ENCODE measurements at regions of chr11 and their contacts with region 1.

Region 1: GRCh38 chr11:10623797-10624761 is 55.6 kb upstream of the LYVE1 start:
- DNase-seq: peak; percentile 41 to 84
- H3K4me3 ChIP-seq: no peak overlapping the region
- H3K27ac ChIP-seq: no peak overlapping the region
- H3K4me1 ChIP-seq: no peaks in the 10 kb centered on the region; a peak in 1 of 7 replicates
- H3K27me3 ChIP-seq: no peaks in the 10 kb centered on the region
- CTCF ChIP-seq: peak; percentile 74 to 84 (median 82)
- EP300 ChIP-seq: no peak
- POLR2A ChIP-seq: no peak
- RAD21 ChIP-seq: peak; percentile 89 to 92

Region 2: GRCh38 chr11:10375280-10375971 is 248.7 kb before region 1 on chr11:
- CTCF ChIA-PET with region 1: no interaction called
- POLR2A ChIA-PET with region 1: no interaction called
- DNase-seq: peak in 1 of 2 experiments; percentile 22
- H3K4me3 ChIP-seq: no peak overlapping the region
- H3K27ac ChIP-seq: no peak overlapping the region
- H3K4me1 ChIP-seq: no peaks in the 10 kb centered on the region
- H3K27me3 ChIP-seq: no peaks in the 10 kb centered on the region
- CTCF ChIP-seq: no peak
- EP300 ChIP-seq: no peak
- POLR2A ChIP-seq: no peak
- RAD21 ChIP-seq: no peak

Region 3: GRCh38 chr11:10400856-10401255 is 223.2 kb before region 1 on chr11:
- CTCF ChIA-PET with region 1: interaction called, 17 read pairs
- POLR2A ChIA-PET with region 1: no interaction called
- DNase-seq: no peak
- H3K4me3 ChIP-seq: no peak overlapping the region
- H3K27ac ChIP-seq: no peak overlapping the region
- H3K4me1 ChIP-seq: no peaks in the 10 kb centered on the region
- H3K27me3 ChIP-seq: no peaks in the 10 kb centered on the region; a peak in 1 of 7 replicates
- CTCF ChIP-seq: no peak
- EP300 ChIP-seq: no peak
- POLR2A ChIP-seq: no peak
- RAD21 ChIP-seq: no peak

Region 4: DNA sequence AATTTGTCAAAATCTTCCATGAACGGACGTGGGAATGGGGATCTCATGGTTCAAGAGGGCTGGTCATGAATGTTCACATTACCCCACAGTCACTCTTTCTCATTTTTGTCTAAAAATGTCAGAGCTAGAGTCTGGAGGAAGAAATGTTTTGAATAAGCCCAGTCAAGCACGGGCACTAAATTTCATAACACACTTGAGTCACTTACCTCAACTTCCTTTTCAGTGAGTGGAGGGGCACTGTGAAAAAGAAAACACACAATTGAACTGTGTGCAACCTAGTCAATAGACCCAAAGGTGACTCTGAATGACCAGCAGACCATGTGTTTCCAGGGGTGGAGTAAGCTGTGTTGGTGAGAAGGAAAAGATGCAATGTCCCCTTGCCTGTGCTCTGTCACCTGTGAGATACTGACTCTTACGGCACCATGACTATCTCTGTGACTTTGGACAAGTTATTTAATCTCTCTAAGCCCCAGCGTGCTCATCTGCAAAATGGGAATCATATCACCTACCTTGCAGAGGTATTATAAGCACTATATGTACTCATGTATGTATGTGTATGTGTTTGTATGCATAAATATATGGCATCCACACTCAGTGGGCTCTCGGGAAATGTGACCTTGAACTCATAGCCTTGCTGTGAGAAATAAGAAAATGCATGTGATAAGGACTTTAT is 17.4 kb before region 1 on chr11:
- CTCF ChIA-PET with region 1: interaction called, 29 read pairs
- POLR2A ChIA-PET with region 1: no interaction called
- DNase-seq: no peak
- H3K4me3 ChIP-seq: no peak overlapping the region
- H3K27ac ChIP-seq: no peak overlapping the region
- H3K4me1 ChIP-seq: peaks cover 0 to 12% (median 6%) of the 10 kb centered on the region in 4 experiments; a peak in 5 of 7 replicates
- H3K27me3 ChIP-seq: no peaks in the 10 kb centered on the region
- CTCF ChIP-seq: no peak
- EP300 ChIP-seq: no peak
- POLR2A ChIP-seq: no peak
- RAD21 ChIP-seq: no peak

Region 5: DNA sequence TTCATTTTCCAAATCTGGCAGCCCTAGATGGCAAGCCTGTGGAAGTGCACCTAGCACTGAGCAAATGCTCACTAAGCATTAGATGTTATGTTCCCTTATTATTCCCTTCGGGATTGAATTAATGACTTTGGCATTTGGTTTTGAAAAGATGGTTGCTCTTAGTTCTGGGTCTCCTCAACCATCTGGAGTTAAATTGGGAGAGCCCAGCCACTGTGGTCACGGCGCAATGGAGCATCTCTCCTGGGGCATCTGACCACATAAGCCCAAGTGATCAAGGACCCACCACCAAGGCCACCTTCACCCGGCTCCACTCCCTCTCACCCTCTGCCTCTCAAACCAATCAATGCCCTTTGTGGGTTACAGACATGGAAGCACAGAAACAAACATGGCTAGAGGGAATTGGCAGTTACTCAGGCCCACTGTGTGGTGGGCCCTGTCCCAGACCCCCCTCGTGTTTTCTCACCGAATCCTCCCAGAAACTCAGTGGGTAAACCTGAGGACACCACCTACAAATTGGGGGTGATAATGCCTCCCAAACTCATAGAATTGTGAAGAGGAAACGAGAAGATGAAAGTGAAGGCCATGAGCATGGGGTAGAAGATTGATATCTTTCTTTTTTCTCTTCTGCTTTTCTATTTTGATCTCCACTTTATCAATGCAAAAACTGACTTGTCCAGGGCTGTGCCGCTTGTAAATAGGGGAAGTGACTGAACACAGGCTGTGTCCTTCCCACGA is 17.3 kb after region 1 on chr11:
- CTCF ChIA-PET with region 1: interaction called, 43 read pairs
- POLR2A ChIA-PET with region 1: interaction called, 6 read pairs
- DNase-seq: no peak
- H3K4me3 ChIP-seq: no peak overlapping the region
- H3K27ac ChIP-seq: no peak overlapping the region
- H3K4me1 ChIP-seq: no peaks in the 10 kb centered on the region
- H3K27me3 ChIP-seq: no peaks in the 10 kb centered on the region
- CTCF ChIP-seq: no peak
- EP300 ChIP-seq: no peak
- POLR2A ChIP-seq: no peak
- RAD21 ChIP-seq: no peak

Region 6: DNA sequence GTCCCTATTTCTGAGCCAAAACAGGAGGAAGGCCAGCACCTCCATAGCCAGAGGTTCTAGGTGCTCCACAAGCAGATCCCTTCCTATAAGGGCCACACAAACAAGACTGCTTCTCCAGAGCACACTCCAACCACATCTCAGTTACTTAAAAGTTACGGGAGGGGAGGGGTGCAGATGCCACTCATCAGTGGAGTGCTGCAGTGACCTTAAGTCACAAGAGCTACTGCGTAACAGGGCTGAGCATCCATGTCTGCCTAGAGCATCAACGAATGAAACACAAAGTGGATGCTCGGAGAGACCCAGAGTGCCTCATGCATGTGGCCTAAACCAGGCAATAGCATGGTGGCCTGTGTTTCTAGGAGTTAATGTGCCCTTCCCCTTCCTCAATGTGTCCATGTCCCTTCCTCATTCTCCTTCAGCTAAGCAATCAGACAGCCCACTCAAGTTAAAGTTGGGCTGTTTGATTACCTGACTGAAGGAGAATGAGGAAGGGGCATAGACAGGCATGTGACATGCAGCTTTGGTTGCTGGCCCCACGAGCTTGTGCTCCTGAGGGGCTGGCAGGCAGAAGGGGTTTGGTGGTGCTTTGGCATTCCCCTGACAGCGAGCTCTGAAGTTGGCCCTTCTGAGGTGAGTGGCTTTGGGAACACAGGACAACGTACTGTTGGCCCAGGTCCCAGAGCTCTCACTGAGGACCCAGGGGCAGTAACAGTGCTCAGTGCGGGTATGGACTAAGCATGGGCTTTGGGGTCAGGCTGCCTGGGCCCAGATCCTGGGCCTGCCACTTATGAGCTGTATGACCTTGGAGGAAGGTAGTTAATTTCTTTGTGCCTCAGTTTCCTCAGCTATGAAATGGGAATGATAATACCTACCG is 22.6 kb after region 1 on chr11:
- CTCF ChIA-PET with region 1: interaction called, 36 read pairs
- POLR2A ChIA-PET with region 1: no interaction called
- DNase-seq: no peak
- H3K4me3 ChIP-seq: no peak overlapping the region
- H3K27ac ChIP-seq: no peak overlapping the region
- H3K4me1 ChIP-seq: peaks cover 0 to under 1% (median 0%) of the 10 kb centered on the region in 4 experiments; a peak in 1 of 7 replicates
- H3K27me3 ChIP-seq: no peaks in the 10 kb centered on the region
- CTCF ChIP-seq: no peak
- EP300 ChIP-seq: no peak
- POLR2A ChIP-seq: no peak
- RAD21 ChIP-seq: no peak

Region 7: DNA sequence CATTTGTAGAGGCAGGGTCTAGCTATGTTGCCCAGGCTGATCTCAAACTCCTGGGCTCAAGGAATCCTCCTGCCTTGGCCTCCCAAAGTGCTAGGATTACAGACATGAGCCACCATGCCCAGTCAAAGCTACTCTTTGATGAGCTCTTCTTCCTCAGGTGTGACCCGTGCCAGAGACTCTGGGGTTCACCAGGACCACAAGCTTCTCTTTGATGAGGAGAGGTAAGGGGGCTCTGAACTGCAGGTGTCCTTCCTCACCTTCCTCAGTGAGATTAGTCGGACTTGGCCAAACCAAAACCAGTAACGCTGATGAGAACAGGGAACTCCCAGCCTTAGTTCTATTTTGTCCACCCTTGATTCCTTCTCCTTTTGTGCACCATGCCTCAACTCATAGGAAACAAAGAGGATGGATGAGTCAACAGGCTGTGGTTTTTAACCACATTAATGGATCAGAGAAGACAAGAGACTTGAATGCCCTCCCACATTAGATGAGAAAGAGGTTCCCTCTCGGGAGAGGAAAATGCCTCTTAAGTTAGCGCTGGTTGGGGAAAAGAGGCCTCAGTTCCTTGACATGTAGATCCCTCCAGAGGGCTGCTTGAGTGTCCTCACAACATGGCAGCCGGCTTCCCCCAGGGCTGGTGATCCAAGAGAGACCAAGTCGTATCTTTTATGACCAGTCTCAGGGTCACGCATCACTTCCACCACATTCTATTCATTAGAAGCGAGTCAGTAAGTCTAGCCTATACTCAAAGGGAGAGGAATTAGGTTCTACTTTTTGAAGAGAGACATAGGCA is 101.2 kb after region 1 on chr11:
- CTCF ChIA-PET with region 1: interaction called, 64 read pairs
- POLR2A ChIA-PET with region 1: no interaction called
- DNase-seq: no peak
- H3K4me3 ChIP-seq: no peak overlapping the region
- H3K27ac ChIP-seq: no peak overlapping the region
- H3K4me1 ChIP-seq: peaks cover 0 to 4% (median 0%) of the 10 kb centered on the region in 4 experiments; a peak in 1 of 7 replicates
- H3K27me3 ChIP-seq: no peaks in the 10 kb centered on the region
- CTCF ChIP-seq: no peak
- EP300 ChIP-seq: no peak
- POLR2A ChIP-seq: no peak
- RAD21 ChIP-seq: no peak

Region 8: DNA sequence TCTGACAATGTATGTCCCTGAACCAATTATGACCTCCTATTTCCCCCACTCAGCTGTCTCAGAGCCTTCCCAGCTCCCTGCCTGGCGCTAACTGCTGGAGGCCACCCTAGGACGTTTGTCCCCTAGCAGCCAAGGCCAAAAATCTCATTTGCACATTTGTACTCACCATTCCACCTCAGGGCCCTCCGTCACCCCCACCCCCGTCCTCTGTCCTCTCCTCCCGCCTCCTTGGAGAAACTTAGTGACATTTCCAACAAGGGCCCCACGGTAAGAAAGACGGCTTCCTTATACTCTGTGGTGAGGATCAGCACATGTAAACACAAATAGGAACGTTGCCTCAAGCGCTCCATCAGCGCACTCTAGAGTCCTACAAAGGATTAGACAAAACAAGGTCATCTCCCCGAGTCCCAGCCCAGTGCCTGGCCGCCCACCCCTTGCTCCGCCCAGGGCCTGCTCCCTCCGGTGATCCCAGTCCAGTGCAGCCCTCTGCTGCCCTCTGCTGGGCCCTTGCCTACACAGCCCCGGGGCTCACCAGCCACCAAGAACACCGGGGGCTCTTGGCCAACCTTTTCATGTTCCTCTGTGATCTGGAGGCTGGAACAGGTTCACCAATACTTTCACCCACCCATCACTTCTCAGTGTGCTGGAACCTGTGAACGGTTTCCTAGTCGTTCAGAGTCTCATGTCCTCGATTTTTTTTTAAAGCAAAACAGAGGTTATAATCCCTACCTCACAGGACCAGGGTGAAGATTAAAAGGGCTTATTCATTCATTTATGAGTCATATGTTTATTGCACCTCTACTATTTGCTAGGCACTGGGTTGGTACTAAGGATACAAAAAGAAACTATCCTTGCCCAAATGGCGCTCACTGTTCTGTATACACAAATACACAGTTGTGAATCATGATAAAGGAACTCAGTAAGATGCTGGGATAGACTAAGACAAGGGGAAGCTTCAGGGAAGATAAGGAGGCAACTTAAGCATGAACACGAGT is 111.7 kb after region 1 on chr11:
- CTCF ChIA-PET with region 1: interaction called, 64 read pairs
- POLR2A ChIA-PET with region 1: interaction called, 3 read pairs
- DNase-seq: peak; percentile 90 to 98
- H3K4me3 ChIP-seq: peak overlapping the region in 1 of 4 experiments; percentile 47; a peak in 4 of 8 replicates
- H3K27ac ChIP-seq: no peak overlapping the region
- H3K4me1 ChIP-seq: peaks cover 0 to 4% (median 3%) of the 10 kb centered on the region in 4 experiments; a peak in 4 of 7 replicates
- H3K27me3 ChIP-seq: no peaks in the 10 kb centered on the region; a peak in 1 of 7 replicates
- CTCF ChIP-seq: peak; percentile 85 to 95 (median 93)
- EP300 ChIP-seq: no peak; a peak in 1 of 3 replicates
- POLR2A ChIP-seq: 0 out of 3 replicates have a peak, but pooled peaks of 1 of the 2 experiments have one; percentile 23
- RAD21 ChIP-seq: peak; percentile 99

Region 9: DNA sequence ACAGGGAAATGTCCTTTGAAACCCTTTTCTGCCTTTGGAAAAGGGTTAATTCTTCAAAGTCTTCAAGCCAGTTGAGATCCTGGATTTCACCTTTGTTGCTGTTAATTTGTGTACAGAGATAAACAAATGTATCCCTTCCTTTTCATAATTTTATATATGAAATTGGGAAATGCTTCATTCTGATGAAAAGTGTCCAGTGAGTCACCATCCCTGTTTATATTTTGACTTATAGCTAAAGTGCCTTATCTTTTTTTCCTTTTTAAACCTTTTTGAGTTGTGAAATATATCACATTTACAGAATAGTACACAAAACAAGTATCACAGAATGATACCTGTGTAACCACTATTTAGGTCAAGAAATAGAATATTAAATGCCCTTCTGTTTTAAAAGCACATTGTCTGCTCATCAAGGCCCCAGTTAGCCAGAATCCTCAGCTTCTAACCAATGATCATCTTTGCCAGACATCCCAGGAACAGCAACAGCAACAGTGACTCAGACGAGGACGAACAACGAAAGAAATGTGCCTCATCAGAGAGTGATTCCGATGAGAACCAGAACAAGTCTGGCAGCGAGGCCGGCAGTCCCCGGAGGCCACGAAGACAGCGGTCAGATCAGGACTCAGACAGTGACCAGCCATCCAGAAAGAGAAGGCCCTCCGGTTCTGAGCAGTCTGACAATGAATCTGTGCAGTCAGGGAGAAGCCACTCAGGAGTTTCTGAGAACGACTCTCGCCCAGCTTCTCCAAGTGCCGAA is 154.3 kb after region 1 on chr11:
- CTCF ChIA-PET with region 1: no interaction called
- POLR2A ChIA-PET with region 1: no interaction called
- DNase-seq: no peak
- H3K4me3 ChIP-seq: no peak overlapping the region
- H3K27ac ChIP-seq: no peak overlapping the region
- H3K4me1 ChIP-seq: no peaks in the 10 kb centered on the region
- H3K27me3 ChIP-seq: no peaks in the 10 kb centered on the region
- CTCF ChIP-seq: no peak
- EP300 ChIP-seq: no peak
- POLR2A ChIP-seq: no peak
- RAD21 ChIP-seq: no peak

Measured in H1 (cell line).